CD8-positive, alpha-beta T cell (primary cell): ENCODE measurements at regions of chr15 and their contacts with region 1.

Region 1: DNA sequence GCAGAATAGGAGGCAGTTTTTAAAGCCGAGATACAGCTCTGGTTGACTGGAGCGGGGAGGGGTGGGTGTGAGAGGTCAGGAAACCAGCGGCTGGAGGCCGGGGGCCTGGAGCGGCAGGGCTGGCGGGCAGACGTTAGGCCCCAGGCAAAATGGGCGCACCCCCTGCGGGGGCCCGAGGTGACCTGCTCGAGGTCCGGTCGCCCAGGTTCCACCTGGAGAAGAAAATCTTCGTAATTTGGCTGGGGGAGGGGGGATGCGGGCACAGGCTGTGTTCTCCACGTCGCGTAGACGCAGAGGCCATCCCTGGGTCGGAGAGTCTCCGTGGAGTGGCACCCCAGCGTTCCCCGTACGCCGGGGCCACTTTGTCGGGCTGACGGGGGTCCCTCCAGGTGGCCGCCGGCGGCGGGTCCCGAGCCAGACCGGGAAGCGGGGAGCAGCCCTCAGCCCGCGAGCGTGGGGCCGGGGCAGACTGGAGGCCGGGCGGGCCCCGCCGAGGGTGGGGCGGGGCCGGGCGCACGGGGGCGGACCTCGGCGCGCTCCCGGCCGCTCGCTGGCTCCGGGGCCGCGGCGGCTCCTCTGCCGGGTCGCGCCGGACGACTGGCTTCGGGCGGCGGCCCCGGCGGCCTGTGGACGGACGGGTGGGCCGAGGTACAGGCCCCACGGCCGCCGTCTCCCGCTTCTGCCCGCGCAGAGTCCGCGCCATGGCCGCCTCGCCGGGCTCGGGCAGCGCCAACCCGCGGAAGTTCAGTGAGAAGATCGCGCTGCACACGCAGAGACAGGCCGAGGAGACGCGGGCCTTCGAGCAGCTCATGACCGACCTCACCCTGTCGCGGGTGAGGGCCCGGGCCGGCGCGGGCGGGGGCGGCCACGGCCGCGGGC is at the start of gene CRTC3:
- DNase-seq: peak; percentile 28 to 79 (median 56)
- ATAC-seq: peak; percentile 83
- H3K4me3 ChIP-seq: peak within 1 kb of the TSS; percentile 79 to 83
- H3K4me3 Mint-ChIP-seq: peak within 1 kb of the TSS; percentile 90
- H3K27ac ChIP-seq: peak within 1 kb of the TSS; percentile 64 to 69
- H3K27ac Mint-ChIP-seq: peak within 1 kb of the TSS; percentile 91
- H3K4me1 ChIP-seq: peaks cover 34% of the 10 kb centered on the region
- H3K4me1 Mint-ChIP-seq: peaks cover 43% of the 10 kb centered on the region
- H3K27me3 ChIP-seq: no peaks in the 10 kb centered on the region
- H3K27me3 Mint-ChIP-seq: no peaks in the 10 kb centered on the region
- CTCF ChIP-seq: no peak
- total RNA-seq, gene CRTC3: 74.0 to 77.9 TPM

Region 2: DNA sequence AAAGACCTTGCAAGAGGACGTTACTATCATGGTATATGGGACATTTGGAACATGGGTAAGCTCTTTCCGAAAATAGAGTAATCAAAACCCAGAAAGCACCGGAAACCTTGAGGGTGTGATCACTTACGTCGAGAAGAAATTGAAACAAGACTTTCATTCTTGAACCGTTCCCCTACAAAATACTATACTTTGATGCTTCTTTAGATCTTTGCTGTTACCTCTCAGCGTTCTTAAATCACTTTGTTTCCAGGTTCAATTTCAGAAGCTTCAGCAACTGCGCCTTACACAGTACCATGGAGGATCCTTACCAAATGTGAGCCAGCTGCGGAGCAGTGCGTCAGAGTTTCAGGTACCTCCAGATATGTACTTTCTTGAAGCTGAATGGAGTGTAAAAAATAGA is 10.2 kb after region 1 on chr15:
- CTCF ChIA-PET with region 1: interaction called, 4 read pairs
- POLR2A ChIA-PET with region 1: interaction called, 16 read pairs
- intact Hi-C with region 1: loop called in 1 of 2 experiments (anchors 1 kb)
- DNase-seq: peak in 4 of 9 experiments; percentile 24 to 65 (median 38)
- ATAC-seq: peak; percentile 84
- H3K4me3 ChIP-seq: peak overlapping the region in 1 of 2 experiments; percentile 30
- H3K4me3 Mint-ChIP-seq: peak overlapping the region; percentile 82
- H3K27ac ChIP-seq: peak overlapping the region; percentile 27 to 71
- H3K27ac Mint-ChIP-seq: peak overlapping the region; percentile 95
- H3K4me1 ChIP-seq: peaks cover 26% of the 10 kb centered on the region
- H3K4me1 Mint-ChIP-seq: peaks cover 79% of the 10 kb centered on the region
- H3K27me3 ChIP-seq: no peaks in the 10 kb centered on the region
- H3K27me3 Mint-ChIP-seq: no peaks in the 10 kb centered on the region
- CTCF ChIP-seq: no peak

Region 3: GRCh38 chr15:90557186-90558084 is 27.8 kb after region 1 on chr15:
- CTCF ChIA-PET with region 1: interaction called, 8 read pairs
- POLR2A ChIA-PET with region 1: interaction called, 12 read pairs
- intact Hi-C with region 1: loop called in 1 of 2 experiments (anchors 2 kb)
- DNase-seq: peak in 4 of 9 experiments; percentile 24 to 58 (median 39)
- ATAC-seq: peak; percentile 53
- H3K4me3 ChIP-seq: no peak overlapping the region
- H3K4me3 Mint-ChIP-seq: peak overlapping the region; percentile 26
- H3K27ac ChIP-seq: no peak overlapping the region
- H3K27ac Mint-ChIP-seq: peak overlapping the region; percentile 84
- H3K4me1 ChIP-seq: peaks cover 53% of the 10 kb centered on the region
- H3K4me1 Mint-ChIP-seq: peaks cover 79% of the 10 kb centered on the region
- H3K27me3 ChIP-seq: no peaks in the 10 kb centered on the region
- H3K27me3 Mint-ChIP-seq: no peaks in the 10 kb centered on the region
- CTCF ChIP-seq: no peak

Region 4: GRCh38 chr15:90564051-90564450 is 34.4 kb after region 1 on chr15:
- CTCF ChIA-PET with region 1: interaction called, 8 read pairs
- POLR2A ChIA-PET with region 1: interaction called, 12 read pairs
- intact Hi-C with region 1: loop called (anchors 2 to 5 kb)
- DNase-seq: peak in 2 of 9 experiments; percentile 26 to 66
- ATAC-seq: peak; percentile 47
- H3K4me3 ChIP-seq: no peak overlapping the region
- H3K4me3 Mint-ChIP-seq: peak overlapping the region; percentile 54
- H3K27ac ChIP-seq: peak overlapping the region; percentile 34 to 75
- H3K27ac Mint-ChIP-seq: peak overlapping the region; percentile 94
- H3K4me1 ChIP-seq: peaks cover 95% of the 10 kb centered on the region
- H3K4me1 Mint-ChIP-seq: peaks cover 87% of the 10 kb centered on the region
- H3K27me3 ChIP-seq: no peaks in the 10 kb centered on the region
- H3K27me3 Mint-ChIP-seq: no peaks in the 10 kb centered on the region
- CTCF ChIP-seq: no peak

Region 5: GRCh38 chr15:90598031-90598577 is 68.5 kb after region 1 on chr15:
- CTCF ChIA-PET with region 1: interaction called, 10 read pairs
- POLR2A ChIA-PET with region 1: interaction called, 5 read pairs
- intact Hi-C with region 1: loop called (anchors 1 to 5 kb)
- DNase-seq: peak in 2 of 9 experiments; percentile 14 to 47
- ATAC-seq: no peak
- H3K4me3 ChIP-seq: peak overlapping the region in 1 of 2 experiments; percentile 1
- H3K4me3 Mint-ChIP-seq: peak overlapping the region; percentile 40
- H3K27ac ChIP-seq: peak overlapping the region; percentile 42 to 81
- H3K27ac Mint-ChIP-seq: peak overlapping the region; percentile 99
- H3K4me1 ChIP-seq: peaks cover 74% of the 10 kb centered on the region
- H3K4me1 Mint-ChIP-seq: peaks cover 83% of the 10 kb centered on the region
- H3K27me3 ChIP-seq: no peaks in the 10 kb centered on the region
- H3K27me3 Mint-ChIP-seq: no peaks in the 10 kb centered on the region
- CTCF ChIP-seq: no peak

Region 6: DNA sequence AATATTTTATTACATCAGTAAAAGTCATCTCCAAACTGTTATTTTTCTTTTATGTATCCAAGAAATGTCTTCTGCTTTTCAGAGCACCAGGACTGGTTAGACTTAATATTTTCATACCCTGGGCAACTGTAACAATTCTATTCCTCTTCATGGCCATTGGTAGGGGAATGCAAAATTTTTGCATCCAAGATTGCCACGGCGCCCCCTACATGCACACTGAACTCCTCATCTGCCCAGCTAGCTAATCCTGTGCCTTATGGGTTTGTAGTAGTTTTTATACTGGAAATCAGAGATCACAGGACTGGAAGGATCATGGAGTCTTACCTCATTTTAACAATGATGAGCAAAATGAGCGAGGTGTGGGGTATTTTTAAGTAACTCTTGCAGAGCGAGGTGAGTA is 74.3 kb after region 1 on chr15:
- CTCF ChIA-PET with region 1: interaction called, 10 read pairs
- POLR2A ChIA-PET with region 1: interaction called, 5 read pairs
- intact Hi-C with region 1: loop called in 1 of 2 experiments (anchors 5 kb)
- DNase-seq: peak; percentile 12 to 75 (median 53)
- ATAC-seq: no peak
- H3K4me3 ChIP-seq: no peak overlapping the region
- H3K4me3 Mint-ChIP-seq: no peak overlapping the region
- H3K27ac ChIP-seq: no peak overlapping the region
- H3K27ac Mint-ChIP-seq: peak overlapping the region; percentile 17
- H3K4me1 ChIP-seq: peaks cover 28% of the 10 kb centered on the region
- H3K4me1 Mint-ChIP-seq: peaks cover 46% of the 10 kb centered on the region
- H3K27me3 ChIP-seq: no peaks in the 10 kb centered on the region
- H3K27me3 Mint-ChIP-seq: no peaks in the 10 kb centered on the region
- CTCF ChIP-seq: peak; percentile 45

Region 7: GRCh38 chr15:90680371-90680935 is 150.8 kb after region 1 on chr15:
- CTCF ChIA-PET with region 1: no interaction called
- POLR2A ChIA-PET with region 1: no interaction called
- intact Hi-C with region 1: no loop called
- DNase-seq: no peak
- ATAC-seq: no peak
- H3K4me3 ChIP-seq: no peak overlapping the region
- H3K4me3 Mint-ChIP-seq: no peak overlapping the region
- H3K27ac ChIP-seq: no peak overlapping the region
- H3K27ac Mint-ChIP-seq: no peak overlapping the region
- H3K4me1 ChIP-seq: peaks cover 35% of the 10 kb centered on the region
- H3K4me1 Mint-ChIP-seq: peaks cover 34% of the 10 kb centered on the region
- H3K27me3 ChIP-seq: no peaks in the 10 kb centered on the region
- H3K27me3 Mint-ChIP-seq: no peaks in the 10 kb centered on the region
- CTCF ChIP-seq: no peak

Region 8: GRCh38 chr15:90762109-90762508 is 232.5 kb after region 1 on chr15:
- CTCF ChIA-PET with region 1: no interaction called
- POLR2A ChIA-PET with region 1: no interaction called
- intact Hi-C with region 1: no loop called
- DNase-seq: peak in 1 of 9 experiments; percentile 23
- ATAC-seq: no peak
- H3K4me3 ChIP-seq: no peak overlapping the region
- H3K4me3 Mint-ChIP-seq: no peak overlapping the region
- H3K27ac ChIP-seq: no peak overlapping the region
- H3K27ac Mint-ChIP-seq: no peak overlapping the region
- H3K4me1 ChIP-seq: no peaks in the 10 kb centered on the region
- H3K4me1 Mint-ChIP-seq: no peaks in the 10 kb centered on the region
- H3K27me3 ChIP-seq: no peaks in the 10 kb centered on the region
- H3K27me3 Mint-ChIP-seq: no peaks in the 10 kb centered on the region
- CTCF ChIP-seq: no peak